ENCODE measurements at regions of chr13 and their contacts with region 1.

Region 1: DNA sequence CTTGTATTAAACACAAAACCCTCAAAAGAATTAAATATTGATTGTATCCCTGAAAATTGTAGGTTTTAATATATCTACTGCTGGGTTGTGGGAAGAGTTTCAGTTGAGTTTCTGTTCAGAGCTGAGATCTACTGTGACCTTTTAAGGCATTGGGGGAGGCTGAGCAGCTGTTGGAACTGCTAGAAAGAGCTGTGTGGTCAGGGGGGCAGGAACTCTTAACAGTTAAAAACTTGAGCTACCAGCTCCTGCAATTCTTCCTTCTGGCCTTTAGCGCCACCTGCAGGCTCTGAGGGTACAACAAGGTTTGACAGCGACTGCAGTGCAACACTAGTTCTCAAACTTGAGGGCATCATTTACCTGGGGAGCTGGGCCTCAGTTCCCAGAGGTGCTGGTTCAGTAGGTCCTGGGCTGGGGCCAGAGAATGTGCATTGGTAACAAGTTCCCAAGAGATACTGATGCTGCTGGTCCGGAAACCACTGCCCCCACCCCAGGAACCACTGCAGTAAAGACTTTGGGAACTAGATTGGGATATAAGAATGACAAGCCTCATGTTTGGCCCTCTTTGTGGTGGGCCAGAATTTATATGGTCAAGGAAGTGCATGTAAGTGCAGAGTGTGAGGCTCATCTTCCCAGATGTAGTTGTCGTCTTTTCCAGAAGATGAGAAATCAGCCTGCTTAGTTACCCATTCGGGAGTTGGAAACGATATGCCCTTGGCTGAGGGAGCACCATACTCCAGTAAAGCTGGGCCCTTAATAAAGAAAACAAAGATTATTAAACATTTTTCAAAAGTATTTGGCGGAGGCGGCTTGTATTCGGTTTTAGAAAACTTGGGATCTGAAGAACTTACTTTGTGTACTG is 2.6 kb downstream of the RNASEH2B start:
- DNase-seq: peak; percentile 88
- ATAC-seq: peak; percentile 63
- H3K4me3 ChIP-seq: peak overlapping the region; percentile 95
- H3K27ac ChIP-seq: peak overlapping the region; percentile 99
- H3K4me1 ChIP-seq: peaks cover 25% of the 10 kb centered on the region
- H3K27me3 ChIP-seq: no peaks in the 10 kb centered on the region
- CTCF ChIP-seq: peak; percentile 89 to 98 (median 91); a peak in 5 of 6 replicates
- EP300 ChIP-seq: peak; percentile 38 to 94; a peak in 3 of 4 replicates
- POLR2A ChIP-seq: peak; percentile 37; the same call in 1 of the 2 replicates
- RAD21 ChIP-seq: peak; percentile 98

Region 2: GRCh38 chr13:49996951-49997895 is 914.9 kb before region 1 on chr13 and contains the start of gene TRIM13:
- CTCF ChIA-PET with region 1: interaction called, 24 read pairs
- POLR2A ChIA-PET with region 1: interaction called, 5 read pairs
- RAD21 ChIA-PET with region 1: interaction called, 38 read pairs
- SMC1A ChIA-PET with region 1: interaction called, 21 read pairs
- in situ Hi-C with region 1: loop called (anchors 5 kb)
- intact Hi-C with region 1: loop called (anchors 5 kb)
- DNase-seq: peak; percentile 48
- ATAC-seq: peak; percentile 84
- H3K4me3 ChIP-seq: peak within 1 kb of the TSS; percentile 92
- H3K27ac ChIP-seq: peak within 1 kb of the TSS; percentile 96
- H3K4me1 ChIP-seq: peaks cover 12% of the 10 kb centered on the region
- H3K27me3 ChIP-seq: no peaks in the 10 kb centered on the region
- CTCF ChIP-seq: peak; percentile 80 to 87 (median 81)
- EP300 ChIP-seq: 0 out of 4 replicates have a peak, but pooled peaks of 1 of the 2 experiments have one; percentile 26
- POLR2A ChIP-seq: peak; percentile 91
- RAD21 ChIP-seq: peak; percentile 68
- polyA plus RNA-seq, gene TRIM13: 25.7 to 33.8 TPM

Region 3: GRCh38 chr13:50365408-50366391 is 546.5 kb before region 1 on chr13:
- CTCF ChIA-PET with region 1: no interaction called
- POLR2A ChIA-PET with region 1: no interaction called
- RAD21 ChIA-PET with region 1: interaction called, 5 read pairs
- SMC1A ChIA-PET with region 1: no interaction called
- in situ Hi-C with region 1: no loop called
- intact Hi-C with region 1: loop called (anchors 5 kb)
- DNase-seq: peak; percentile 67
- ATAC-seq: peak; percentile 81
- H3K4me3 ChIP-seq: no peak overlapping the region
- H3K27ac ChIP-seq: no peak overlapping the region
- H3K4me1 ChIP-seq: peaks cover 24% of the 10 kb centered on the region
- H3K27me3 ChIP-seq: peaks cover 0 to 4% of the 10 kb centered on the region in 2 experiments; a peak in 1 of 4 replicates
- CTCF ChIP-seq: no peak
- EP300 ChIP-seq: peak in 1 of 2 experiments; percentile 42; a peak in 1 of 4 replicates
- POLR2A ChIP-seq: no peak
- RAD21 ChIP-seq: no peak

Region 4: GRCh38 chr13:50757008-50757407 is 155.2 kb before region 1 on chr13:
- CTCF ChIA-PET with region 1: interaction called, 6 read pairs
- POLR2A ChIA-PET with region 1: no interaction called
- RAD21 ChIA-PET with region 1: interaction called, 11 read pairs
- SMC1A ChIA-PET with region 1: no interaction called
- in situ Hi-C with region 1: no loop called
- intact Hi-C with region 1: no loop called
- DNase-seq: no peak
- ATAC-seq: no peak
- H3K4me3 ChIP-seq: no peak overlapping the region
- H3K27ac ChIP-seq: no peak overlapping the region
- H3K4me1 ChIP-seq: no peaks in the 10 kb centered on the region
- H3K27me3 ChIP-seq: no peaks in the 10 kb centered on the region
- CTCF ChIP-seq: no peak
- EP300 ChIP-seq: no peak
- POLR2A ChIP-seq: no peak
- RAD21 ChIP-seq: no peak

Region 5: GRCh38 chr13:50893211-50893852 is 18.8 kb before region 1 on chr13:
- CTCF ChIA-PET with region 1: interaction called, 85 read pairs
- POLR2A ChIA-PET with region 1: interaction called, 39 read pairs
- RAD21 ChIA-PET with region 1: interaction called, 77 read pairs
- SMC1A ChIA-PET with region 1: interaction called, 141 read pairs
- in situ Hi-C with region 1: no loop called
- intact Hi-C with region 1: loop called (anchors 1 kb)
- DNase-seq: no peak
- ATAC-seq: peak; percentile 88
- H3K4me3 ChIP-seq: peak overlapping the region; percentile 50; the same call in 1 of the 2 replicates
- H3K27ac ChIP-seq: peak overlapping the region; percentile 93
- H3K4me1 ChIP-seq: peaks cover 34% of the 10 kb centered on the region
- H3K27me3 ChIP-seq: no peaks in the 10 kb centered on the region
- CTCF ChIP-seq: no peak
- EP300 ChIP-seq: peak; percentile 62 to 78; a peak in 3 of 4 replicates
- POLR2A ChIP-seq: no peak
- RAD21 ChIP-seq: no peak